ENCODE measurements at regions of chr11 and their contacts with region 1.

Region 1: DNA sequence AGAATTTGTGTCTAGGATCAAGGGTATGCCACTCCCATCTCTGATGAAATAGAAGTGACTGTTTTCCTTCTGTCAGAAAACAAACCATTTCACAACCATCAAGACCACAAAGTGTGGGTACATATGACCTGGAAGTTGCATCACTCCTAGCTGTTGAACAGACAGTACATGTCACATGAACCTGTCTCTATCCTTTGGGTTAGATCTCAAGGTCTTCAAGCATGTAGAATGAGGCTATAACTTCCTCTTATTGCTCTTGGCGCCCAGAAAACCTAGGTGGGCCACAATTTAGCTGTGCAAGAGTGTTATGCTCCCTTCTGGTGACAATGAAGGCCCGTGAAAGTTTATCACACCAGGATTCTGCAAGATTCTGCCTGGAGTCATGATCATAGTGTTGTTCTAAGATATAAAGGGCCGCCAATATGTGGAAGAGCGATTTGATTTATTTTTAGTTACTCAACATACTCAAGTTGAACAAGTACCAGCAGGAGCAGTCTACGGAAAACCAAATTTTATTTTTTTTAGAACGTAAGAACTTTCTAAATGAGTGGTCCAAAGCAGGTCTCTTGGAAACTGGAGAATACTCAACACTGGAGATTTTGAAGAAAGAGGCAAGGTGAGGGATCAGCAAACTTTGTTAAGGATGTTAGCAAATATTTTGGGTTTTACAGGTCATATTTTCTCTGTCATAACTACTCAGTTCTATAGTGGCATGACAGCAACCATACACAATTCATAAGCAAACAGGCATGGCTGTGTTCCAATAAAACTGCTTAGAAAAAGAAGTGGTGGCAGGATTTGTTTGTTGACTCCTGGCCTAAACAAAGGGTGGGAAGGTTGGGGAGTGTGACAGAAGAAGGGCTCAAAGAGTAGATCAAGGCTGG is 101.8 kb downstream of the USP35 start:
- DNase-seq: peak in 2 of 9 donors; percentile 28 to 30
- ATAC-seq: peak; percentile 80
- H3K4me3 ChIP-seq: no peak overlapping the region
- H3K4me3 Mint-ChIP-seq: peak overlapping the region in 4 of 10 donors; percentile 2 to 68 (median 35)
- H3K27ac ChIP-seq: no peak overlapping the region
- H3K27ac Mint-ChIP-seq: peak overlapping the region in 4 of 9 donors; percentile 15 to 95 (median 32)
- H3K4me1 ChIP-seq: peaks cover 0 to 5% of the 10 kb centered on the region in 2 donors
- H3K4me1 Mint-ChIP-seq: peaks cover 18 to 58% (median 32%) of the 10 kb centered on the region in 7 donors
- H3K27me3 ChIP-seq: no peaks in the 10 kb centered on the region
- H3K27me3 Mint-ChIP-seq: no peaks in the 10 kb centered on the region

Region 2: GRCh38 chr11:78156105-78156830 is 134.3 kb before region 1 on chr11:
- CTCF ChIA-PET with region 1: no interaction called
- POLR2A ChIA-PET with region 1: no interaction called
- intact Hi-C with region 1: no loop called
- DNase-seq: no peak
- ATAC-seq: no peak
- H3K4me3 ChIP-seq: no peak overlapping the region
- H3K4me3 Mint-ChIP-seq: no peak overlapping the region
- H3K27ac ChIP-seq: no peak overlapping the region
- H3K27ac Mint-ChIP-seq: no peak overlapping the region
- H3K4me1 ChIP-seq: no peaks in the 10 kb centered on the region
- H3K4me1 Mint-ChIP-seq: peaks cover 0 to 6% (median 0%) of the 10 kb centered on the region in 7 donors
- H3K27me3 ChIP-seq: no peaks in the 10 kb centered on the region
- H3K27me3 Mint-ChIP-seq: no peaks in the 10 kb centered on the region

Region 3: DNA sequence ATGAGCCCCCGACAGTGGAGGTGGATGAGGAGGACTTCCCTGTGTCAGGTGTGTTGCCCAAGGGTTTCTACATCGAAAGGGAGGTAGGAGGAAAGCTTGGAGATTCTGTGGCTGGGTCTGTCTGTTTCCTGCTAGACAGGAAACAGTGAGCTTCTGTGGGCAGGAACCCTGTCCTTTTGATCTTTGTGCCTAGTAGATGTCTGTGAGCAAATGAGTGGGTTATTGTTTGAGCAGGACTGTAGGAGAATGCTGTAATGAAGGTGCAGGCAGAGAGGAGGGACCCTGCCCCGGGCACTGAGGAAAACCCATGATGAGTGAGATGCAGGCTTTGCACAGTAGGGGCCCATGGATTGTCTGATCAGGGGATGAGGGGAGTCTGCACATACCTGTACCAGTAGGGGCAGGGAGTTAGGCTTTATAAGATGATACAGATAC is 87.8 kb before region 1 on chr11:
- CTCF ChIA-PET with region 1: no interaction called
- POLR2A ChIA-PET with region 1: no interaction called
- intact Hi-C with region 1: loop called in 1 of 2 experiments (anchors 2 kb)
- DNase-seq: peak; percentile 43 to 92 (median 84)
- ATAC-seq: peak; percentile 86
- H3K4me3 ChIP-seq: peak overlapping the region; percentile 53
- H3K4me3 Mint-ChIP-seq: peak overlapping the region; percentile 79 to 91 (median 87)
- H3K27ac ChIP-seq: peak overlapping the region; percentile 91
- H3K27ac Mint-ChIP-seq: peak overlapping the region; percentile 93 to 100 (median 97)
- H3K4me1 ChIP-seq: peaks cover 19 to 36% of the 10 kb centered on the region in 2 donors
- H3K4me1 Mint-ChIP-seq: peaks cover 25 to 65% (median 55%) of the 10 kb centered on the region in 7 donors
- H3K27me3 ChIP-seq: no peaks in the 10 kb centered on the region
- H3K27me3 Mint-ChIP-seq: no peaks in the 10 kb centered on the region

Region 4: DNA sequence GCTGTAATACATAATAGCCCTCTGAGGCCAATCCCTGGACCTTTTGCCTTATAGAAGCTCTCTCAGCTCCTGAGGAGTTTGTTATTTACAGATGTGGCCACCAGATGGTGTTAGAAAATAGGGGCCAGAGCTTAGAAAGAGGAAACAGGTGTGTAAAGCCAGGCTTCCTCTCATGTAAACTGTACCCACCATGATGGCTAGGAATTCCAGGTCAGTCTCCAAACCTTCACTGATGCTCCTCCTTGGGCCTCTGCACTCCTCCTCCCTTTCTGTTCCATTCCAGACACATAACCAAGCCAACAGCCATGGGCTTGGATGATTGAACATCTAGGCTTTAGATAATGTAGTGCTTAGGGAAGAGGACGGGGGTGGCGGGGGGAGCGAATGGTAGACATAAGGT is 62.1 kb before region 1 on chr11:
- CTCF ChIA-PET with region 1: no interaction called
- POLR2A ChIA-PET with region 1: no interaction called
- intact Hi-C with region 1: loop called in 1 of 2 experiments (anchors 1 kb)
- DNase-seq: peak in 2 of 9 donors; percentile 18 to 21
- ATAC-seq: peak; percentile 76
- H3K4me3 ChIP-seq: no peak overlapping the region
- H3K4me3 Mint-ChIP-seq: no peak overlapping the region
- H3K27ac ChIP-seq: no peak overlapping the region
- H3K27ac Mint-ChIP-seq: peak overlapping the region in 2 of 9 donors; percentile 57 to 65
- H3K4me1 ChIP-seq: no peaks in the 10 kb centered on the region
- H3K4me1 Mint-ChIP-seq: peaks cover 6 to 61% (median 9%) of the 10 kb centered on the region in 7 donors
- H3K27me3 ChIP-seq: no peaks in the 10 kb centered on the region
- H3K27me3 Mint-ChIP-seq: no peaks in the 10 kb centered on the region

Region 5: GRCh38 chr11:78325274-78325781 is 34.8 kb after region 1 on chr11:
- CTCF ChIA-PET with region 1: no interaction called
- POLR2A ChIA-PET with region 1: no interaction called
- intact Hi-C with region 1: loop called in 1 of 2 experiments (anchors 1 kb)
- DNase-seq: peak in 6 of 9 donors; percentile 29 to 63 (median 42)
- ATAC-seq: peak; percentile 88
- H3K4me3 ChIP-seq: no peak overlapping the region
- H3K4me3 Mint-ChIP-seq: peak overlapping the region in 1 of 10 donors; percentile 63
- H3K27ac ChIP-seq: no peak overlapping the region
- H3K27ac Mint-ChIP-seq: peak overlapping the region in 5 of 9 donors; percentile 15 to 91 (median 47)
- H3K4me1 ChIP-seq: peaks cover 0 to 6% of the 10 kb centered on the region in 2 donors
- H3K4me1 Mint-ChIP-seq: peaks cover 3 to 83% (median 18%) of the 10 kb centered on the region in 7 donors
- H3K27me3 ChIP-seq: no peaks in the 10 kb centered on the region
- H3K27me3 Mint-ChIP-seq: no peaks in the 10 kb centered on the region

Region 6: DNA sequence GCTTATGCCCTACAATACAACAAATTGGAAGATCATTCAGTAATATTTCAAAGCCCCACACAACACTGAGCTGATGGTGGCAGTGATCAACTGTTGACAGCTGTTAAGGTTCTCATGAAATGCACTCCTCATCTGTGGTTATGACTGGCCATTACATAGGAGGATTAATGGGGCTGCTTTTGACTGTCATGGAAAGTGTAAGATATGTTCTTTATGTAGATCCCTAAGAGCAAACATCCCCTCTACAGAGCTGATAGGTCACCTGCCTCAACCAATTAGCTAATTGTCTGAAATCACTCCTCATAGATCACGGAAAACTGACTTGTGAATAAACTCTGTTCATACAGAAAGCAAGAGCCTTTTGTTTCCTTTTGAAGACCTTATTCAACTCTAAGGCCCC is 48.9 kb after region 1 on chr11:
- CTCF ChIA-PET with region 1: no interaction called
- POLR2A ChIA-PET with region 1: no interaction called
- intact Hi-C with region 1: loop called in 1 of 2 experiments (anchors 2 kb)
- DNase-seq: no peak
- ATAC-seq: no peak
- H3K4me3 ChIP-seq: no peak overlapping the region
- H3K4me3 Mint-ChIP-seq: peak overlapping the region in 1 of 10 donors; percentile 71
- H3K27ac ChIP-seq: no peak overlapping the region
- H3K27ac Mint-ChIP-seq: peak overlapping the region in 1 of 9 donors; percentile 95
- H3K4me1 ChIP-seq: no peaks in the 10 kb centered on the region
- H3K4me1 Mint-ChIP-seq: peaks cover 0 to 82% (median 7%) of the 10 kb centered on the region in 7 donors
- H3K27me3 ChIP-seq: no peaks in the 10 kb centered on the region
- H3K27me3 Mint-ChIP-seq: peaks cover 0 to 14% (median 7%) of the 10 kb centered on the region in 5 donors

Region 7: GRCh38 chr11:78465169-78465942 is 174.8 kb after region 1 on chr11:
- CTCF ChIA-PET with region 1: no interaction called
- POLR2A ChIA-PET with region 1: no interaction called
- intact Hi-C with region 1: loop called in 1 of 2 experiments (anchors 5 kb)
- DNase-seq: peak in 6 of 9 donors; percentile 16 to 55 (median 26)
- ATAC-seq: peak; percentile 93
- H3K4me3 ChIP-seq: no peak overlapping the region
- H3K4me3 Mint-ChIP-seq: peak overlapping the region; percentile 37 to 81 (median 64)
- H3K27ac ChIP-seq: peak overlapping the region; percentile 3
- H3K27ac Mint-ChIP-seq: peak overlapping the region; percentile 54 to 95 (median 79)
- H3K4me1 ChIP-seq: peaks cover 4 to 5% of the 10 kb centered on the region in 2 donors
- H3K4me1 Mint-ChIP-seq: peaks cover 12 to 44% (median 17%) of the 10 kb centered on the region in 7 donors
- H3K27me3 ChIP-seq: no peaks in the 10 kb centered on the region
- H3K27me3 Mint-ChIP-seq: no peaks in the 10 kb centered on the region

Region 8: DNA sequence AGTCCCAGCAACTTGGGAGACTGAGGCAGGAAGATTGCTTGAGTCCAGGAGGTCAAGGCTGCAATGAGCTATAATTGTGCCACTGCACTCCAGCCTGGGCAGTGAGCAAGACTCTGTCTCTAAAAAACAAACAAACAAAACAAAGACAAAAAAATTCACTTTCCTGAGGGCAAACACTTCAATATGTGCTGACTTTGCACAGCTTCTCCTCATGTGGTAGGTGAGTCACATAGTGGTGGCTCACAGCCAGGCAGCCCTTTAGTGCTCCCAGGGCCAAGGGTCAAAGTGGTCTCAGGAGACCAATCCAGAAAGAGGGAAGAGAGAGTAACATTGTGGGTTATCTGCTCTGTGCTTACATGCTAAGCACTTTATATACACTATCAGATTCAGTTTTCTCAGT is 515.6 kb after region 1 on chr11:
- CTCF ChIA-PET with region 1: no interaction called
- POLR2A ChIA-PET with region 1: no interaction called
- intact Hi-C with region 1: no loop called
- DNase-seq: no peak
- ATAC-seq: peak; percentile 54
- H3K4me3 ChIP-seq: no peak overlapping the region
- H3K4me3 Mint-ChIP-seq: no peak overlapping the region
- H3K27ac ChIP-seq: no peak overlapping the region
- H3K27ac Mint-ChIP-seq: no peak overlapping the region
- H3K4me1 ChIP-seq: no peaks in the 10 kb centered on the region
- H3K4me1 Mint-ChIP-seq: no peaks in the 10 kb centered on the region
- H3K27me3 ChIP-seq: no peaks in the 10 kb centered on the region
- H3K27me3 Mint-ChIP-seq: peaks cover 0 to 16% (median 7%) of the 10 kb centered on the region in 5 donors